ENCODE measurements at regions of chr16 and their contacts with region 1.

Region 1: GRCh38 chr16:73956587-73957494 is 339.8 kb upstream of the PSMD7 start:
- DNase-seq: peak; percentile 52 to 64
- H3K4me3 ChIP-seq: no peak overlapping the region
- H3K4me3 Mint-ChIP-seq: no peak overlapping the region
- H3K27ac Mint-ChIP-seq: no peak overlapping the region
- H3K4me1 ChIP-seq: no peaks in the 10 kb centered on the region
- H3K4me1 Mint-ChIP-seq: no peaks in the 10 kb centered on the region
- H3K27me3 ChIP-seq: no peaks in the 10 kb centered on the region
- H3K27me3 Mint-ChIP-seq: peaks cover 6% of the 10 kb centered on the region
- CTCF ChIP-seq: peak; percentile 83 to 96

Region 2: GRCh38 chr16:73565262-73565661 is 391.6 kb before region 1 on chr16:
- CTCF ChIA-PET with region 1: no interaction called
- POLR2A ChIA-PET with region 1: no interaction called
- intact Hi-C with region 1: loop called (anchors 1 kb)
- DNase-seq: peak in 1 of 2 experiments; percentile 24
- H3K4me3 ChIP-seq: no peak overlapping the region
- H3K4me3 Mint-ChIP-seq: no peak overlapping the region
- H3K27ac Mint-ChIP-seq: no peak overlapping the region
- H3K4me1 ChIP-seq: no peaks in the 10 kb centered on the region
- H3K4me1 Mint-ChIP-seq: peaks cover 5% of the 10 kb centered on the region
- H3K27me3 ChIP-seq: no peaks in the 10 kb centered on the region
- H3K27me3 Mint-ChIP-seq: peaks cover 14% of the 10 kb centered on the region
- CTCF ChIP-seq: peak; percentile 36 to 66